IMR-90 (cell line): ENCODE measurements at regions of chr18 and their contacts with region 1.

Region 1: GRCh38 chr18:47772374-47773248 is 157.8 kb downstream of the SMAD2 start:
- DNase-seq: peak; percentile 42
- ATAC-seq: peak; percentile 95
- H3K4me3 ChIP-seq: no peak overlapping the region
- H3K27ac ChIP-seq: no peak overlapping the region
- H3K4me1 ChIP-seq: no peaks in the 10 kb centered on the region
- H3K27me3 ChIP-seq: no peaks in the 10 kb centered on the region
- CTCF ChIP-seq: peak; percentile 79
- POLR2A ChIP-seq: no peak
- RAD21 ChIP-seq: peak; percentile 86

Region 2: DNA sequence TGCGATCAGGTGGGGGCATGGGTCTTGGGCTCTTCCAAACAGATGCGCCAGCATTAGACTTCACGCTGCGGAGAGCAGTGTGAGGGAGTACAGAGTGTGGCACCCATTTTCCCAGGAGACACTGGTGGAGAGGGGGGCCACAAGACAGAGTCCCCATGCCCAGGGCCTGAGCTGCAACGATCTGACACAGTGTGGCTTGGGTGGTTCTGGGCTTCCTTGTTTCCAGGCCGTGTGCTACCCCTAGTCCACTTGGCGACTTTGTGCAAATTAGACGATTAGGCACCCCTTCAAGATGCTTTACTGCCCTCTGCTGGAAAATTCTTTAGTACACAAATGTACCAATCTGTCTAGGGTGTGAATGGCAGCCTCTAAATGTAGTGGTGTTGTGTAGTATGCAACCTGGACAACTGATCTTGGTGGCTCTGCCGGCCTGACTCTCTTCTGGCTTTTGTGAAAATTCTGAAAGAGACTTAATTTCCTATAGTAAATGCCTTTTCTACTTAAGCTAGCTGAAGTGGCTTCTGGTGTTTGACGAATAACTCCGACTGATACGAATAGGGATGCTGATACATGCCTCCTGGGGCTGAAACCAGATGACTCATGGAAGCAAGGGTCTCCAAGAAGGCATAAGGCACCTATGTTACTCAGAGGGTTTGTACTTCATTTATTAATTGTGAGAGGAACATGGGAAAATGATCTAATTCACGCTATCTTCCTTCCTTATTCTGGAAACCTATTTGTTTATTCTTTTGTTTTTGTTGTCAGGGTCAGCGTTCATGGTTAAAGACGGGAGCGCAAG is 250.1 kb after region 1 on chr18:
- CTCF ChIA-PET with region 1: interaction called, 3 read pairs
- POLR2A ChIA-PET with region 1: no interaction called
- dilution Hi-C with region 1: no loop called
- in situ Hi-C with region 1: loop called (anchors 5 kb)
- intact Hi-C with region 1: loop called (anchors 1 kb)
- DNase-seq: peak; percentile 49
- ATAC-seq: peak; percentile 79
- H3K4me3 ChIP-seq: no peak overlapping the region
- H3K27ac ChIP-seq: no peak overlapping the region
- H3K4me1 ChIP-seq: no peaks in the 10 kb centered on the region
- H3K27me3 ChIP-seq: peaks cover 23% of the 10 kb centered on the region
- CTCF ChIP-seq: peak; percentile 57
- POLR2A ChIP-seq: no peak
- RAD21 ChIP-seq: peak; percentile 70